Heart right ventricle (tissue), 16 donors: ENCODE measurements at regions of chr5 and their contacts with region 1.

Region 1: DNA sequence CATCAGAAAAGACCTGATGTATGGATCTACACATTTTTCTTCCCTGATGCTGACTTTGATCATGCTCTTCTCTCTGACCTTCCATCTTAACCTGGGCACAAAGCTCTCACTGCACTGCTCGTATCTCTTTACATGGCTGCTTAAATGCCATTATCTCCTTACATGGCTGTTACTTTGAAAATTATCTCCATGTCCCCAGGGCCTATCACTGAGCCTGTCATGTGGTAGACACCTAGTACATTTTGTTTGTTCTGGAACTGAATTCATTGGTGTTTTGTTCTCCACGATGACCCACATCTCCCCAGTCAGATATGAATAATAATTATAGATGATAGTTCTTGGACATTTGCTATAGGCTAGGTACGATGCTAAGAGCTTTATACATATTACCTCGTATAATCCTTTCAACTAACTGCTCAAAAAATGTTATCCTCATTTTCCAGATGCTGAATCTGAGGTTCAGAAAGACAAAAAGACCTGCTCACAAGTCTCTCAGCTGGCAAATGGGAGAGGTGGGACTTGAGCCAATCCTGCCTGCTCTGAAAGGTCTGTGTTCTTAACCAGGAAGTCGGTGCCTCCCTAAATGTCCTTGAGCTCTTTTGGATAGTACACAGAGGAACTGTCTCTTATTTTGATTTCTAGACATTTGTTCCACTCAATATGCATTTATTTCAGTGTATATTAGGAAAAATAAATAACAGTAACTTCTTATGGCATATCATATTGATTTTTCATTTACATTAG is 9.8 kb upstream of the CPEB4 start:
- DNase-seq: peak; percentile 45 to 61
- ATAC-seq: peak in 7 of 8 donors; percentile 46 to 94 (median 88)
- H3K4me3 ChIP-seq: no peak overlapping the region
- H3K27ac ChIP-seq: peak overlapping the region; percentile 19 to 84 (median 64)
- H3K4me1 ChIP-seq: peaks cover 0 to 23% (median 16%) of the 10 kb centered on the region in 9 donors
- H3K27me3 ChIP-seq: no peaks in the 10 kb centered on the region
- CTCF ChIP-seq: no peak

Region 2: DNA sequence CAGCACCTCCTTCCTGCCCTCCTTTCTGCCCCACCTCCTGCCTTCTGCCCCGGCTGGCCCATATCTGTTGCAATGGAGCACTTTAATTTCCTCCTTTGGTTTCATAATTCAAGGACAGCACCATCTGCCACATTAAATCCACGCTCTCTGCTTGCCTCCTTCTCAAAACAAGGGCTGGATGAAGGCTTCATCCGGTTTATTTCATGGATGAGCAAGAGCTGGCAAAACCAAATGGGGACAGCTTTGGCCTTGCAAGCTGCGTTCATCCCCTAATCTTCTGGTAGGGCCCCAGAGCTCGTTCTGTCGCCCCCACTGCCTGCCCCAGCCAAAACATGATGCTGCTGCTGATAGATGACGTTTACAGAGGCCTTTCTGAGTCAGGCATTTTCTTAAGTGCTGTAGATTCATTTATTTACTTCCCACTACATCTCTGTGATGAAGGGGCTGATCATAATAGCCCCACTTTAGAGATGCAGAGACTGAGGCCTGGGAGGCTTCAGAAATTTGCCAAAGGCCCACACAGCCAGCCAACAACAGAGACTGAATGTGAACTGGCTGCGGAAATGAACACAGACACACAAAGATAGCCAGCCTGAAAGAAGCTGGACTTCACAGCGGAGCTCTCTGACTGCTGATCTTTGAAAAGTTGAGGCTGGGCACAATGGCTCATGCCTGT is 105.9 kb before region 1 on chr5:
- intact Hi-C with region 1: loop called in 3 of 10 experiments (anchors 5 to 10 kb)
- DNase-seq: no peak
- ATAC-seq: no peak
- H3K4me3 ChIP-seq: no peak overlapping the region
- H3K27ac ChIP-seq: peak overlapping the region in 6 of 10 donors; percentile 4 to 86 (median 50)
- H3K4me1 ChIP-seq: peaks cover 0 to 39% (median 1%) of the 10 kb centered on the region in 9 donors
- H3K27me3 ChIP-seq: no peaks in the 10 kb centered on the region
- CTCF ChIP-seq: no peak

Region 3: DNA sequence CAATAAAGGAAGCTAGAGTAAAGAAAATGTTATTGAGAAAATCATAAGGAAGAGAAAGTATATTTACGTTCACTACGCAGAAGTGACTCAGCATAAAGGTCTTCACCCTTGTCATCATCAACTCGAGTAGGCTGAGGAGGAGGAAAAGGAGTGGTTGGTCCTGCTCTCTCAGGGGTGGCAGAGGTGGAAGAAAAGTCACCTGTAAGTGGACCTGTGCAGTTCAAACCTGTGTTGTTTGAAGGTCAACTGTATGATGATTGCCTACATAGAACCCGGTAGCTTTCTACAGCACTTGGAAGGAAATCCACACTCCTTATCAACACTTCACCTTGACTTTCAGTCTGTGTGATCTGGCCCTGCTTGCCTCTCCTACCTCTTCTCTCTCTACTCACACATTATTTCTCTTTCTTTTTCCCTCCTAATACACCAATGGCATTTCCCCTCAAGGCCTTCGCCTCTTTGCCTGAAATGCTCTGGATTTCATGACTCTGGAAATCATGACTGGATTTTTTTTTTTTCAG is 99.6 kb before region 1 on chr5:
- intact Hi-C with region 1: loop called in 2 of 10 experiments (anchors 5 to 10 kb)
- DNase-seq: no peak
- ATAC-seq: no peak
- H3K4me3 ChIP-seq: no peak overlapping the region
- H3K27ac ChIP-seq: peak overlapping the region in 1 of 10 donors; percentile 71
- H3K4me1 ChIP-seq: peaks cover 0 to 72% (median 14%) of the 10 kb centered on the region in 9 donors
- H3K27me3 ChIP-seq: no peaks in the 10 kb centered on the region
- CTCF ChIP-seq: no peak

Region 4: GRCh38 chr5:173833196-173833985 is 45.0 kb before region 1 on chr5:
- intact Hi-C with region 1: loop called in 1 of 10 experiments (anchors 2 kb)
- DNase-seq: no peak
- ATAC-seq: peak in 6 of 8 donors; percentile 24 to 54 (median 42)
- H3K4me3 ChIP-seq: no peak overlapping the region
- H3K27ac ChIP-seq: peak overlapping the region in 3 of 10 donors; percentile 7 to 80 (median 9)
- H3K4me1 ChIP-seq: peaks cover 0 to 61% (median 2%) of the 10 kb centered on the region in 9 donors
- H3K27me3 ChIP-seq: no peaks in the 10 kb centered on the region
- CTCF ChIP-seq: no peak

Region 5: GRCh38 chr5:174283211-174284005 is 405.0 kb after region 1 on chr5:
- intact Hi-C with region 1: no loop called
- DNase-seq: no peak
- ATAC-seq: no peak
- H3K4me3 ChIP-seq: no peak overlapping the region
- H3K27ac ChIP-seq: no peak overlapping the region
- H3K4me1 ChIP-seq: no peaks in the 10 kb centered on the region
- H3K27me3 ChIP-seq: peaks cover 0 to 29% (median 5%) of the 10 kb centered on the region in 7 donors
- CTCF ChIP-seq: no peak